Naive thymus-derived CD4-positive, alpha-beta T cell (primary cell): ENCODE measurements at regions of chr5 and their contacts with region 1.

Region 1: GRCh38 chr5:151447174-151448037 is at the start of gene SLC36A1:
- DNase-seq: peak; percentile 77 to 99 (median 85)
- ATAC-seq: peak; percentile 100
- H3K4me3 ChIP-seq: peak within 1 kb of the TSS; percentile 77
- H3K4me3 Mint-ChIP-seq: peak within 1 kb of the TSS; percentile 82 to 98 (median 94)
- H3K27ac ChIP-seq: peak within 1 kb of the TSS; percentile 70
- H3K27ac Mint-ChIP-seq: peak within 1 kb of the TSS; percentile 43 to 95 (median 90)
- H3K4me1 ChIP-seq: peaks cover 6 to 15% of the 10 kb centered on the region in 2 donors
- H3K4me1 Mint-ChIP-seq: peaks cover 18 to 22% (median 19%) of the 10 kb centered on the region in 7 donors
- H3K27me3 ChIP-seq: peaks cover 0 to 3% of the 10 kb centered on the region in 2 donors
- H3K27me3 Mint-ChIP-seq: peaks cover 7 to 45% (median 14%) of the 10 kb centered on the region in 5 donors
- total RNA-seq, gene SLC36A1: 4.6 to 16.6 (median 7.1) TPM

Region 2: DNA sequence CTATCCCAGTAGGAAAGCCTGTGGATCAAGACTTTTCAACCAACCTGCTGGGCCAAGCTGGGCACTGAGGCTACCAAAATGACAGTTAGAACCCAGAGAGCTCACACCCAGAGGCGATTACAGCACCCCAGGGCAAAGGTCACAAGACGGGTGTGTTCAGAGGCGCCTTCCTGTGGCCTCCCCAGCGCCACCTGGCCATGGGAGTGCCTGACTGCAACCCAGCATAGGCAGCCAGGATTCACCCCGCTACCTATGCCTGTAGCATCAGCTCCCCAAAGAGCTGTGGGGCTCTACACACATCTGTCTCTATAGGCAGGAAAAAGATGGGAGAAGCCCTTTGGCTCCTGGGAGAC is 1325.3 kb before region 1 on chr5:
- CTCF ChIA-PET with region 1: no interaction called
- POLR2A ChIA-PET with region 1: no interaction called
- intact Hi-C with region 1: no loop called
- DNase-seq: no peak
- ATAC-seq: peak; percentile 61
- H3K4me3 ChIP-seq: no peak overlapping the region
- H3K4me3 Mint-ChIP-seq: no peak overlapping the region
- H3K27ac ChIP-seq: no peak overlapping the region
- H3K27ac Mint-ChIP-seq: peak overlapping the region in 1 of 9 donors; percentile 35
- H3K4me1 ChIP-seq: no peaks in the 10 kb centered on the region
- H3K4me1 Mint-ChIP-seq: peaks cover 0 to 5% (median 0%) of the 10 kb centered on the region in 7 donors
- H3K27me3 ChIP-seq: no peaks in the 10 kb centered on the region
- H3K27me3 Mint-ChIP-seq: no peaks in the 10 kb centered on the region

Region 3: GRCh38 chr5:151157426-151158286 is 289.8 kb before region 1 on chr5 and contains the start of gene ANXA6:
- CTCF ChIA-PET with region 1: no interaction called
- POLR2A ChIA-PET with region 1: no interaction called
- intact Hi-C with region 1: loop called in 1 of 2 experiments (anchors 5 kb)
- DNase-seq: peak; percentile 48 to 79 (median 57)
- ATAC-seq: peak; percentile 92
- H3K4me3 ChIP-seq: peak within 1 kb of the TSS; percentile 85
- H3K4me3 Mint-ChIP-seq: peak within 1 kb of the TSS; percentile 94 to 99 (median 96)
- H3K27ac ChIP-seq: peak within 1 kb of the TSS; percentile 92
- H3K27ac Mint-ChIP-seq: peak within 1 kb of the TSS; percentile 90 to 99 (median 96)
- H3K4me1 ChIP-seq: peaks cover 36 to 44% of the 10 kb centered on the region in 2 donors
- H3K4me1 Mint-ChIP-seq: peaks cover 39 to 69% (median 57%) of the 10 kb centered on the region in 7 donors
- H3K27me3 ChIP-seq: no peaks in the 10 kb centered on the region
- H3K27me3 Mint-ChIP-seq: no peaks in the 10 kb centered on the region
- total RNA-seq, gene ANXA6: 212 to 512 (median 272) TPM

Region 4: DNA sequence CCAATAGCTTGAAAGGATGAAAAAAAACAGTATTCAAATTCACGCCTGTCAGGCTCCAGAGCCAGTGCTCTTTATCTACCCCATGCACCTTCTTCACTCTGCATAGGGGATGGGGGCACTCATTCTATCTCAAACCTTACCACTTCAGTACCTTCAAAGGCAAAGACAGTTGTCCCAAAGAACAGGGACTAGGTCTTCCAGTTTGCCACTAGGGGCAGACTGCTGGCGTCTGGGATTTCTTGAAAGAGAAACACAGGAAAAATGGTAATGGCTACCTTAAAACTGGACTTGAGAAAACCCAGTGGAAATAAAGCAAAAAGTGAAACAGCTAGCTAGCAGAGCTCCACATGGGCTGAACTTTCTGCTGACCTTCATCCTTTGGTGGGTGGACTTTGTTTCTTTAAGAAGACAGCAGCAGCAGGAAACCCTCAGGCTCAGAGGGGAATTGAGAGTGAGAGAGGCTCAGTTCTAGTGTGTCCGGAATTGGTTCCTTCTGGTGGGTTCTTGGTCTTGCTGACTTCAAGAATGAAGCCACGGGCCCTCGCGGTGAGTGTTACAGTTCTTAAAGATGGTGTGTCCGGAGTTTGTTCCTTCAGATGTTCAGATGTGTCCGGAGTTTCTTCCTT is 41.0 kb before region 1 on chr5:
- CTCF ChIA-PET with region 1: no interaction called
- POLR2A ChIA-PET with region 1: no interaction called
- intact Hi-C with region 1: no loop called
- DNase-seq: no peak
- ATAC-seq: no peak
- H3K4me3 ChIP-seq: no peak overlapping the region
- H3K4me3 Mint-ChIP-seq: no peak overlapping the region
- H3K27ac ChIP-seq: no peak overlapping the region
- H3K27ac Mint-ChIP-seq: no peak overlapping the region
- H3K4me1 ChIP-seq: no peaks in the 10 kb centered on the region
- H3K4me1 Mint-ChIP-seq: peaks cover 0 to 3% (median 0%) of the 10 kb centered on the region in 7 donors
- H3K27me3 ChIP-seq: peaks cover 2 to 6% of the 10 kb centered on the region in 2 donors
- H3K27me3 Mint-ChIP-seq: peaks cover 32 to 66% (median 58%) of the 10 kb centered on the region in 5 donors

Region 5: GRCh38 chr5:151463137-151464029 is 16.0 kb after region 1 on chr5:
- CTCF ChIA-PET with region 1: interaction called, 15 read pairs
- POLR2A ChIA-PET with region 1: interaction called, 3 read pairs
- intact Hi-C with region 1: loop called in 1 of 2 experiments (anchors 2 kb)
- DNase-seq: peak in 1 of 9 donors; percentile 4
- ATAC-seq: no peak
- H3K4me3 ChIP-seq: no peak overlapping the region
- H3K4me3 Mint-ChIP-seq: no peak overlapping the region
- H3K27ac ChIP-seq: no peak overlapping the region
- H3K27ac Mint-ChIP-seq: peak overlapping the region in 1 of 9 donors; percentile 49
- H3K4me1 ChIP-seq: no peaks in the 10 kb centered on the region
- H3K4me1 Mint-ChIP-seq: peaks cover 0 to 5% (median 0%) of the 10 kb centered on the region in 7 donors
- H3K27me3 ChIP-seq: no peaks in the 10 kb centered on the region
- H3K27me3 Mint-ChIP-seq: no peaks in the 10 kb centered on the region

Region 6: DNA sequence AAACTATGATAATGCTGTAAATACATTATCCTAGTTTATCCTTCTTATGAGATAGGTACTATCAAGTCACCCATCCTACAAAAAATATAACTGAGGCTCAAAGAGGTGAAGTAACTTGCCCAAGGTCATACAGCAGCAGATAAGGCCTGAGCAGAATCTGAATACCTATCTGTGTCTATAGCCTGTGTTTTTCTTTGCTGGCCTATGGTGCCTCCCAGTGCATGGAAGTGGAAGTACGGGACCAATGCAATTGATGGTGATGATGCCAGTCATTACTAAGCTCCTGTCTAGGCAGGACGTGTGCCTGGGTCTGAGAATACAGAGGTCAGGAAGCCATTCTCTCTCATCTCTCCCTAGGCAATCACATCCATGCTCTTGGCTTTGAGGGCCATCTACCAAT is 75.9 kb after region 1 on chr5:
- CTCF ChIA-PET with region 1: interaction called, 9 read pairs
- POLR2A ChIA-PET with region 1: no interaction called
- intact Hi-C with region 1: loop called (anchors 1 kb)
- DNase-seq: peak in 7 of 9 donors; percentile 3 to 45 (median 32)
- ATAC-seq: peak; percentile 79
- H3K4me3 ChIP-seq: no peak overlapping the region
- H3K4me3 Mint-ChIP-seq: no peak overlapping the region
- H3K27ac ChIP-seq: no peak overlapping the region
- H3K27ac Mint-ChIP-seq: peak overlapping the region in 2 of 9 donors; percentile 4 to 47
- H3K4me1 ChIP-seq: no peaks in the 10 kb centered on the region
- H3K4me1 Mint-ChIP-seq: peaks cover 2 to 13% (median 9%) of the 10 kb centered on the region in 7 donors
- H3K27me3 ChIP-seq: no peaks in the 10 kb centered on the region
- H3K27me3 Mint-ChIP-seq: peaks cover 0 to 5% (median 0%) of the 10 kb centered on the region in 5 donors

Region 7: DNA sequence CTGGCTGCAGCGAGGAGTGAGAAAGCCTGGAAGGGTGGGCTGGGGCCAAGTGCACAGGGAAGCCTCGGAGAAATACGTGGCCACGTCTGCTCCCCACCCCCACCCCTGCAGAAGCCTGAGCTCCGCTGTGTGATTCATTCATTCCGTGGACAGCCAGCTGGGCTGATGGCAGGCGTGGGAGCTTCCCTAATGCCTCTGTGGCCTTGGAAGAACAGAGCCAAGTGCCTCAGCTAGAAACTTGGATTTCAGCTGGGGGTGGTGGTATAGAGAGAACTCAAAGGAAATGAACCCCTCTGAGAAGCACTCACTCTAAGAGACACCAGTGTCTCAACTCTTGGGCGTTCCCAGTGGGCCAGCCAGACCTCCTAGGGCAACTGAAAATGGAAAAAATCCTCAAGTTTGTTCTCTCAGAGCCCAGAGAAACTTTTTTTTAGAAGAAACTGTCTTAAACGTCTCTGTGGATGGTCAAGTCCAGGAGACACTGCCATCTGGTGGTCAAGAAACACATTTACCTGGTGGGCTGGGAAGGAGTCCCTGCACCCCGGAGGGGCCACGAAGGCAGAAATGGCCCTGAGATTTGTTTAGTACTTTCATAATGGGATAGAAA is 293.0 kb after region 1 on chr5:
- CTCF ChIA-PET with region 1: interaction called, 7 read pairs
- POLR2A ChIA-PET with region 1: no interaction called
- intact Hi-C with region 1: loop called (anchors 1 kb)
- DNase-seq: peak in 7 of 9 donors; percentile 9 to 57 (median 47)
- ATAC-seq: peak; percentile 71
- H3K4me3 ChIP-seq: no peak overlapping the region
- H3K4me3 Mint-ChIP-seq: no peak overlapping the region
- H3K27ac ChIP-seq: no peak overlapping the region
- H3K27ac Mint-ChIP-seq: peak overlapping the region in 1 of 9 donors; percentile 23
- H3K4me1 ChIP-seq: peaks cover 5 to 8% of the 10 kb centered on the region in 2 donors
- H3K4me1 Mint-ChIP-seq: peaks cover 5 to 30% (median 20%) of the 10 kb centered on the region in 7 donors
- H3K27me3 ChIP-seq: no peaks in the 10 kb centered on the region
- H3K27me3 Mint-ChIP-seq: no peaks in the 10 kb centered on the region

Region 8: GRCh38 chr5:152142840-152143469 is 695.5 kb after region 1 on chr5:
- CTCF ChIA-PET with region 1: no interaction called
- POLR2A ChIA-PET with region 1: no interaction called
- intact Hi-C with region 1: loop called in 1 of 2 experiments (anchors 5 kb)
- DNase-seq: peak; percentile 21 to 56 (median 44)
- ATAC-seq: peak; percentile 73
- H3K4me3 ChIP-seq: no peak overlapping the region
- H3K4me3 Mint-ChIP-seq: no peak overlapping the region
- H3K27ac ChIP-seq: no peak overlapping the region
- H3K27ac Mint-ChIP-seq: no peak overlapping the region
- H3K4me1 ChIP-seq: no peaks in the 10 kb centered on the region
- H3K4me1 Mint-ChIP-seq: peaks cover 0 to 2% (median 0%) of the 10 kb centered on the region in 7 donors
- H3K27me3 ChIP-seq: no peaks in the 10 kb centered on the region
- H3K27me3 Mint-ChIP-seq: peaks cover 0 to 7% (median 0%) of the 10 kb centered on the region in 5 donors

Region 9: DNA sequence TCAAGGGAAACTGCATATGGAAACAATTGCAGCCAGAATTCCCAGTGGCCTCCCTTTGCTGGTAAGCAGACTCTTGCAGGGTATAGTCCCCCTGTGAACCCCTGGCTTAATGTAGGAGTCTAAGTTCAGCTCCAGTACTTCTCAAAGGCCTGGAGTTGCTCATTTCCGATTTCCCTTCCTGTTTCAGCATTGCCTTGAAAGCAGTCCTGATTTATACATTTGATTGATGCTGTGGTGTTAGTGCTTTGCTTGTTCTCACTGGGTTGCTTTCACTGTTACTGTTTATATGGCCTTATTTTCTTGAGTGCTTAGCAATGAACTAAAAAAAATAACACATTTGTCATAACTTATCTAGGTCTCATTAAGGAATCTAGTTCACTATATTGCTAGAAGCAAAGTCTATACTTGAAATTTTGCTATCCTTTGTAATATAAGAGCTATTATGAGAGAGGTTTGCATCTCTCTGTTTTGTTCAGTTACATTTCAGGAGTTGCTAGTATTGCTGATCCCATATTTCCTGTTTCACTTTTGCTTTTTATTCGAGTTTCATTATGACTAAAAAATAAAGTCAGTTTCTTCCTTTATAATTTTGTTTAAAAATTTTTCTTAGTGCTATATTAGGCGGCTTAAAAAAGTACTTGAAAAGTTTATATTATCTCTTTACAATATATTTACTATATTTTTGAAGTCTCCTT is 1080.1 kb after region 1 on chr5:
- CTCF ChIA-PET with region 1: no interaction called
- POLR2A ChIA-PET with region 1: no interaction called
- intact Hi-C with region 1: loop called in 1 of 2 experiments (anchors 5 kb)
- DNase-seq: no peak
- ATAC-seq: no peak
- H3K4me3 ChIP-seq: no peak overlapping the region
- H3K4me3 Mint-ChIP-seq: peak overlapping the region in 8 of 10 donors; percentile 23 to 73 (median 48)
- H3K27ac ChIP-seq: no peak overlapping the region
- H3K27ac Mint-ChIP-seq: peak overlapping the region in 8 of 9 donors; percentile 1 to 82 (median 40)
- H3K4me1 ChIP-seq: peaks cover 7 to 12% of the 10 kb centered on the region in 2 donors
- H3K4me1 Mint-ChIP-seq: peaks cover 10 to 28% (median 21%) of the 10 kb centered on the region in 7 donors
- H3K27me3 ChIP-seq: no peaks in the 10 kb centered on the region
- H3K27me3 Mint-ChIP-seq: peaks cover 0 to 40% (median 0%) of the 10 kb centered on the region in 5 donors